Kidney (tissue), 22 donors: ENCODE measurements at regions of chr18 and their contacts with region 1.

Region 1: DNA sequence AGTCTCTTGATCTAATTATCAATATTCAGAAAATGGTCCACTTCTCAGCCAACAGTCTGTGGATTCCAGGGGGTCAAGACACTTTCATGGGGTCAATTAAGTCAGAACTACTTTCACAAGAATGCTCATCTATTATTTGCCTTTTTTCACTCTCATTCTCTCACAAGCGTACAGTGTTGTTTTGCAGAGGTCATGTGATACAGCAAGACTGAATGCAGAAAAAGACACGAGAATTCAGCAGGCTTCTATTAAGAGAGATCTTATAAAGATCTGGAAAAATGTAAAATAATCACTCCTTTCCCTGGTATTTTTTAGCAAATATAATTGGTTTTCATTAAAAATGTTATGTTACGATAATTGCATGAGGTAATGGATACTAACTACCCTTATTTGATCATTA is 8.7 kb downstream of the RPRD1A start:
- DNase-seq: no peak
- H3K4me3 ChIP-seq: no peak overlapping the region
- H3K27ac ChIP-seq: no peak overlapping the region
- H3K4me1 ChIP-seq: no peaks in the 10 kb centered on the region
- H3K27me3 ChIP-seq: no peaks in the 10 kb centered on the region
- CTCF ChIP-seq: no peak

Region 2: GRCh38 chr18:35998967-35999366 is 59.7 kb before region 1 on chr18:
- intact Hi-C with region 1: loop called (anchors 10 kb)
- DNase-seq: no peak
- H3K4me3 ChIP-seq: no peak overlapping the region
- H3K27ac ChIP-seq: no peak overlapping the region
- H3K4me1 ChIP-seq: no peaks in the 10 kb centered on the region
- H3K27me3 ChIP-seq: no peaks in the 10 kb centered on the region
- CTCF ChIP-seq: no peak

Region 3: GRCh38 chr18:36381075-36381474 is 322.4 kb after region 1 on chr18:
- intact Hi-C with region 1: no loop called
- DNase-seq: peak in 1 of 5 donors; percentile 23
- H3K4me3 ChIP-seq: no peak overlapping the region
- H3K27ac ChIP-seq: no peak overlapping the region
- H3K4me1 ChIP-seq: peaks cover 0 to 17% (median 10%) of the 10 kb centered on the region in 3 donors
- H3K27me3 ChIP-seq: no peaks in the 10 kb centered on the region
- CTCF ChIP-seq: no peak